ENCODE measurements at regions of chr13 and their contacts with region 1.

Region 1: GRCh38 chr13:105116966-105117365 is 1418.5 kb downstream of the EFNB2 start:
- DNase-seq: peak; percentile 90
- H3K4me3 ChIP-seq: no peak overlapping the region
- H3K27ac ChIP-seq: peak overlapping the region; percentile 52
- H3K4me1 ChIP-seq: peaks cover 30% of the 10 kb centered on the region
- H3K27me3 ChIP-seq: no peaks in the 10 kb centered on the region
- CTCF ChIP-seq: no peak
- POLR2A ChIP-seq: no peak

Region 2: DNA sequence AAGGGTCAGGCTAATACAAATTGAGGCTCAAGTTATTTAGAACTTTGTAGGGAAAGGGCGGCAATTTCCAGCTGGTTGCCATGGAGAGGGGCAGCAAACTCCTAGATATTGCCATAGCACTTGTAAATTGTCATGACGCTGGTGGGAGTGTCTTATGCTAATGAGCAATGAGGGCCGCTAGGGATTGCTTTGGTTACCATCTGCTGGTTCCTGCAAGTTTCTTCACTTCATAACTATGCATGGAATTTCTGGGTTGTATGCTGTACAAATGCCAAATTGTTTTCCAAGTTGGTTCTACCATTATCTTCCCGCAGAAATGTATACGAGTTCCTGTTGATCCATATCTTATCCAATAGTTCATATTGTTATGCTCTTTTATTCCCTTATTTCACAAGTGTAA is 79.1 kb after region 1 on chr13:
- CTCF ChIA-PET with region 1: no interaction called
- POLR2A ChIA-PET with region 1: no interaction called
- dilution Hi-C with region 1: no loop called
- intact Hi-C with region 1: loop called (anchors 1 kb)
- DNase-seq: peak; percentile 88
- H3K4me3 ChIP-seq: no peak overlapping the region
- H3K27ac ChIP-seq: peak overlapping the region; percentile 69
- H3K4me1 ChIP-seq: peaks cover 9% of the 10 kb centered on the region
- H3K27me3 ChIP-seq: no peaks in the 10 kb centered on the region
- CTCF ChIP-seq: no peak
- POLR2A ChIP-seq: no peak

Region 3: GRCh38 chr13:105207572-105208293 is 90.8 kb after region 1 on chr13:
- CTCF ChIA-PET with region 1: no interaction called
- POLR2A ChIA-PET with region 1: no interaction called
- dilution Hi-C with region 1: no loop called
- intact Hi-C with region 1: no loop called
- DNase-seq: no peak
- H3K4me3 ChIP-seq: no peak overlapping the region
- H3K27ac ChIP-seq: no peak overlapping the region
- H3K4me1 ChIP-seq: no peaks in the 10 kb centered on the region
- H3K27me3 ChIP-seq: no peaks in the 10 kb centered on the region
- CTCF ChIP-seq: no peak
- POLR2A ChIP-seq: no peak

Region 4: GRCh38 chr13:105436943-105437342 is 320.0 kb after region 1 on chr13:
- CTCF ChIA-PET with region 1: no interaction called
- POLR2A ChIA-PET with region 1: no interaction called
- dilution Hi-C with region 1: no loop called
- intact Hi-C with region 1: loop called (anchors 10 kb)
- DNase-seq: peak; percentile 92
- H3K4me3 ChIP-seq: no peak overlapping the region
- H3K27ac ChIP-seq: peak overlapping the region; percentile 74
- H3K4me1 ChIP-seq: peaks cover 33% of the 10 kb centered on the region
- H3K27me3 ChIP-seq: no peaks in the 10 kb centered on the region
- CTCF ChIP-seq: no peak
- POLR2A ChIP-seq: no peak

Measured in endothelial cell of umbilical vein (primary cell).